Naive thymus-derived CD4-positive, alpha-beta T cell (primary cell): ENCODE measurements at regions of chr15 and their contacts with region 1.

Region 1: DNA sequence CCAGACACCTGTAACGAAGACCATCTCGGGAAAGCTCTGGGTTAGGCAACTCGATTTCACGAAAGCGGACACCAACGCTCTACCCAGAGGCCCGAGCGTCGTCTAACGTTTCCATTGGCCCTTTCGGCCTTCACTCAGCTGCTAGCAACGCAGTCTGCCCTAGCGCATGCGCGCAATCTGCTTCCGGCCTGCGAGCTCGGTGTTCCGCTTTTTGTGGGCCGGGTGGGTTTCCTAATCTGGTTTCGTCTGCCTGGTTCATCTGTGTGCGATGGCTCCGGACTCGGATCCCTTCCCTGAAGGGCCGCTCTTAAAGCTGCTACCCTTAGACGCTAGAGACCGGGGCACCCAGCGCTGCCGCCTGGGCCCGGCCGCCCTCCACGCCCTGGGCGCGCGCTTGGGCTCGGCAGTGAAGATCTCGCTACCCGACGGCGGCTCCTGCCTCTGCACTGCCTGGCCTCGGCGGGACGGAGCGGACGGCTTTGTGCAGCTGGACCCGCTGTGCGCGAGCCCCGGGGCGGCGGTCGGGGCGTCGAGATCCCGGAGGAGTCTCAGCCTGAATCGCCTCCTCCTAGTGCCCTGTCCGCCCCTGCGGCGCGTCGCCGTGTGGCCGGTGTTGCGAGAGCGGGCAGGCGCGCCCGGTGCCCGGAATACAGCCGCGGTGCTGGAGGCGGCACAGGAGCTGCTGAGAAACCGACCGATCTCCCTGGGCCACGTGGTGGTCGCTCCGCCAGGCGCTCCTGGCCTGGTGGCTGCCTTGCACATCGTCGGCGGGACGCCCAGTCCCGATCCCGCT is 24.0 kb upstream of the GATM start:
- DNase-seq: peak; percentile 84 to 98 (median 96)
- ATAC-seq: peak; percentile 96
- H3K4me3 ChIP-seq: peak overlapping the region; percentile 86
- H3K4me3 Mint-ChIP-seq: peak overlapping the region; percentile 88 to 99 (median 96)
- H3K27ac ChIP-seq: peak overlapping the region; percentile 83
- H3K27ac Mint-ChIP-seq: peak overlapping the region; percentile 91 to 98 (median 95)
- H3K4me1 ChIP-seq: peaks cover 8 to 22% of the 10 kb centered on the region in 2 donors
- H3K4me1 Mint-ChIP-seq: peaks cover 18 to 40% (median 38%) of the 10 kb centered on the region in 7 donors
- H3K27me3 ChIP-seq: no peaks in the 10 kb centered on the region
- H3K27me3 Mint-ChIP-seq: peaks cover 0 to 14% (median 0%) of the 10 kb centered on the region in 5 donors

Region 2: GRCh38 chr15:43824302-43825246 is 1577.8 kb before region 1 on chr15 and contains the start of gene MFAP1:
- CTCF ChIA-PET with region 1: no interaction called
- POLR2A ChIA-PET with region 1: interaction called, 3 read pairs
- intact Hi-C with region 1: loop called in 1 of 2 experiments (anchors 2 kb)
- DNase-seq: peak; percentile 63 to 94 (median 89)
- ATAC-seq: peak; percentile 94
- H3K4me3 ChIP-seq: peak within 1 kb of the TSS; percentile 100
- H3K4me3 Mint-ChIP-seq: peak within 1 kb of the TSS; percentile 94 to 100 (median 98)
- H3K27ac ChIP-seq: peak within 1 kb of the TSS; percentile 97
- H3K27ac Mint-ChIP-seq: peak within 1 kb of the TSS; percentile 95 to 99 (median 98)
- H3K4me1 ChIP-seq: peaks cover 32 to 34% of the 10 kb centered on the region in 2 donors
- H3K4me1 Mint-ChIP-seq: peaks cover 37 to 81% (median 53%) of the 10 kb centered on the region in 7 donors
- H3K27me3 ChIP-seq: no peaks in the 10 kb centered on the region
- H3K27me3 Mint-ChIP-seq: no peaks in the 10 kb centered on the region
- total RNA-seq, gene MFAP1: 8.5 to 37.3 (median 21.8) TPM

Region 3: DNA sequence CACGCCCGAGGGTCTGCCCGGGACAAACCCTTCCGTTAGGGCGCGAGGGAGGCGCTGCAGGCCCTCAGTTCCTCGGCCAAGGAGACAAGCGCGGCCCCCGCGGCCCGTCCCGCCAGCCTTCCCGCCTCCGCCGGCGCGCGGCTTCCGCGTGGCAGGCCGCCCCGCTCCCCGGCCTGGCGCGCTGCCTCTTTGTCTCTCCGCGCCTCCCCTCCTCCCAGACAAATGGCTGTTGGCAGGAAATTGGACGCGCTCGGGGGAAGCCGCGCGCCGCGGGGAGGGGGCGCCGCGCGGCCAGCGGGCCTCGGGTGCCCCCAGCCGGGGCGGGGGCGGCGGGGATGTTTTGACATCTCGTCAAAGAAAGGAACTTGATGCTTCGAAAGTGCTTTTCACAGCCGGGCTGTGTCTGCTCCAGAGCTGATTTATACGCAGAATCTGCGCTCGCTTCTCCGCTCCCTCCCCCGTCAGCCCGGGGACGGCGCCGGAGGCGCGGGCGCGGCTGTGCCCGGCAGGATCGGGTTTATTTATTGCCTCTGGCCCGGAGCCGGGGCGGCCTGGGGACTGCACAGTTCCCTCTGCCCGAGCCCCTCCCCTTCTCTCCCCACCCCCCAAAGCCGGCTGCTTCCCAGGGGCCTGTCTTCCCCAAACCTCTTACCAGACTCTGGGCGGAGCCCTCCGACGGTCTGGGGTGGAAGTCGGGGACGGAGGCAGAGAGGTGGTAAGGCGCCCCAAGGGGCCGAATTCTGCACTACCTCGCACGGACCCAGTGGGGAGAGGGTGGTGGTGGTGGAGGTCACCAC is 235.3 kb before region 1 on chr15:
- CTCF ChIA-PET with region 1: interaction called, 36 read pairs
- POLR2A ChIA-PET with region 1: interaction called, 17 read pairs
- intact Hi-C with region 1: loop called in 1 of 2 experiments (anchors 1 kb)
- DNase-seq: peak; percentile 58 to 82 (median 78)
- ATAC-seq: peak; percentile 95
- H3K4me3 ChIP-seq: peak overlapping the region; percentile 70
- H3K4me3 Mint-ChIP-seq: peak overlapping the region; percentile 62 to 86 (median 74)
- H3K27ac ChIP-seq: peak overlapping the region; percentile 95
- H3K27ac Mint-ChIP-seq: peak overlapping the region; percentile 62 to 92 (median 83)
- H3K4me1 ChIP-seq: peaks cover 10 to 13% of the 10 kb centered on the region in 2 donors
- H3K4me1 Mint-ChIP-seq: peaks cover 0 to 31% (median 18%) of the 10 kb centered on the region in 7 donors
- H3K27me3 ChIP-seq: no peaks in the 10 kb centered on the region
- H3K27me3 Mint-ChIP-seq: no peaks in the 10 kb centered on the region

Region 4: GRCh38 chr15:45307230-45307924 is 95.0 kb before region 1 on chr15:
- CTCF ChIA-PET with region 1: no interaction called
- POLR2A ChIA-PET with region 1: no interaction called
- intact Hi-C with region 1: loop called (anchors 1 to 5 kb)
- DNase-seq: peak in 4 of 9 donors; percentile 1 to 19 (median 2)
- ATAC-seq: no peak
- H3K4me3 ChIP-seq: peak overlapping the region; percentile 15
- H3K4me3 Mint-ChIP-seq: peak overlapping the region in 9 of 10 donors; percentile 31 to 77 (median 70)
- H3K27ac ChIP-seq: no peak overlapping the region
- H3K27ac Mint-ChIP-seq: peak overlapping the region in 1 of 9 donors; percentile 26
- H3K4me1 ChIP-seq: no peaks in the 10 kb centered on the region
- H3K4me1 Mint-ChIP-seq: peaks cover 4 to 13% (median 8%) of the 10 kb centered on the region in 7 donors
- H3K27me3 ChIP-seq: no peaks in the 10 kb centered on the region
- H3K27me3 Mint-ChIP-seq: peaks cover 20 to 45% (median 33%) of the 10 kb centered on the region in 5 donors

Region 5: DNA sequence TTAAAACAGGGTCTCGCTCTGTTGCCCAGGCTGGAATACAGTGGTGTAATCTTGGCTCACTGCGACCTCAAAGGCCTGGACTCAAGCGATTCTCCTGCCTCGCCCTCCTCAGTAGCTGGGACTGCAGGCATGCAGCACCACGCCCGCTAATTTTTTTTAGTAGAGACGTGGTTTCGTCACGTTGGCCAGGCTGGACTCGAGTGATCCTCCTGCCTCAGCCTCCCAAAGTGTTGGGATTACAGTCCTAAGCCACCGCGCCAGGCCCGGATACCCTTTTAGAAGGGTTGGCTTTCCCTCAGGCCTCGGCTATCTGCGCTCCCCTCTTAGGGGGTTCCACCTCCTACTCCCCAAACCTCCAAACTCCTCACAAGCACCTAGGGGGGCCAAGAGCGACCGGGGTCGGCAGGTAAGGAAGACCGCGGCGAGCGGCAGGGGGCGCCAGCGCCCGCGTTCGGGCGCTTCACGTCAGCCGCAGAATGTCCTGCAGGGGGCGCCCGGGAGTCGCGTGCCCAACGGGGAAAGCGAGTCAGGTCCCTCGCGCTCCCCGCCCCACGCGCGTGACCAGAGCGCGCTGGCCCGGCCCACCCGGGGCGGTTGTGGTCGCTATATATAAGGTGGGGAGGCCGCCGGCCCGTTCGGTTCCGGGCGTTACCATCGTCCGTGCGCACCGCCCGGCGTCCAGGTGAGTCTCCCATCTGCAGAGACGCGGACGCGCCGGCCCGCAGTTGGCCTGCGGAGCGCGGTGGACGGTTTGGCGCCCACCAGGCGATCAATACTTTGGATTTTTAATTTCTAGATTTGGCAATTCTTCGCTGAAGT is 27.8 kb after region 1 on chr15:
- CTCF ChIA-PET with region 1: interaction called, 6 read pairs
- POLR2A ChIA-PET with region 1: no interaction called
- intact Hi-C with region 1: loop called in 1 of 2 experiments (anchors 1 kb)
- DNase-seq: peak; percentile 68 to 95 (median 83)
- ATAC-seq: peak; percentile 97
- H3K4me3 ChIP-seq: peak overlapping the region; percentile 53
- H3K4me3 Mint-ChIP-seq: peak overlapping the region in 9 of 10 donors; percentile 40 to 72 (median 62)
- H3K27ac ChIP-seq: no peak overlapping the region
- H3K27ac Mint-ChIP-seq: peak overlapping the region in 1 of 9 donors; percentile 13
- H3K4me1 ChIP-seq: no peaks in the 10 kb centered on the region
- H3K4me1 Mint-ChIP-seq: peaks cover 0 to 5% (median 1%) of the 10 kb centered on the region in 7 donors
- H3K27me3 ChIP-seq: no peaks in the 10 kb centered on the region
- H3K27me3 Mint-ChIP-seq: peaks cover 0 to 37% (median 5%) of the 10 kb centered on the region in 5 donors

Region 6: DNA sequence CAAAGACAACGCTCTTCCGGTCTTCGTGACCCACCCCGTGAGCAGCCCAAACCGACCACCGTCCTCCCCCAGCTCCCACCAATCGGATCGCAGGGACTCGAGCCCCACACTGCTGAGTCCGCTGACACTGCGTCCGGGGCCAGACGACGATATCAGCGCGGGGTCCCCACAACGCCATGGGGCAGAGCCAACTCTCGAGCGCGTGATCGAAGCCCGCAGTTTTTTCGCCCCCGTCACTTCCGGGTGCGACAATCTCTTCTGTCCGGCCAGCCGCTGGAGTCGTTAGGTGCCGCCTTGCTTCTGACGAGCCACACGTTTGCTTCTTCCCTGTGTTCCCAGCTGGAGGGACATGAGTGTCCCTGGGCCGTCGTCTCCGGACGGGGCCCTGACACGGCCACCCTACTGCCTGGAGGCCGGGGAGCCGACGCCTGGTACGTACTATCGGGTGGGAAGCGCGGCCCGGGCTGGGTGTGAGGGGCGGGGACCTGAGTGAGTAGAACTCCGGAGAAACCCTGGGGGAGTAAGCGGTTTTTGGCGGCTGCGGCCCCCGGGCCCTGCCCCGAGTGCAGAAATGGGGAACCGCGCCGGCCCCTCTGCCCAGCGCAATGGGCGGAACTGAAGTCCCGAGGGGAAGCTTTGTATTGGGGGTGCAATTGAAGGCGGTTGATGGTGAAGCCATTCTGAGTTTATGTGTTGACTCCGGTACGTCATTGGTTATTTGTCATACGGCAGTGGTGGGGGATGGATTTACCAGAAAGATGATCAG is 184.9 kb after region 1 on chr15 and contains the start of gene BLOC1S6:
- CTCF ChIA-PET with region 1: interaction called, 8 read pairs
- POLR2A ChIA-PET with region 1: interaction called, 53 read pairs
- intact Hi-C with region 1: loop called (anchors 1 kb)
- DNase-seq: peak; percentile 81 to 91 (median 87)
- ATAC-seq: peak; percentile 87
- H3K4me3 ChIP-seq: peak within 1 kb of the TSS; percentile 87
- H3K4me3 Mint-ChIP-seq: peak within 1 kb of the TSS; percentile 96 to 100 (median 98)
- H3K27ac ChIP-seq: peak within 1 kb of the TSS; percentile 97
- H3K27ac Mint-ChIP-seq: peak within 1 kb of the TSS; percentile 100
- H3K4me1 ChIP-seq: peaks cover 25 to 26% of the 10 kb centered on the region in 2 donors
- H3K4me1 Mint-ChIP-seq: peaks cover 27 to 55% (median 38%) of the 10 kb centered on the region in 7 donors
- H3K27me3 ChIP-seq: no peaks in the 10 kb centered on the region
- H3K27me3 Mint-ChIP-seq: no peaks in the 10 kb centered on the region
- total RNA-seq, gene BLOC1S6: 34.4 to 63.9 (median 50.9) TPM

Region 7: DNA sequence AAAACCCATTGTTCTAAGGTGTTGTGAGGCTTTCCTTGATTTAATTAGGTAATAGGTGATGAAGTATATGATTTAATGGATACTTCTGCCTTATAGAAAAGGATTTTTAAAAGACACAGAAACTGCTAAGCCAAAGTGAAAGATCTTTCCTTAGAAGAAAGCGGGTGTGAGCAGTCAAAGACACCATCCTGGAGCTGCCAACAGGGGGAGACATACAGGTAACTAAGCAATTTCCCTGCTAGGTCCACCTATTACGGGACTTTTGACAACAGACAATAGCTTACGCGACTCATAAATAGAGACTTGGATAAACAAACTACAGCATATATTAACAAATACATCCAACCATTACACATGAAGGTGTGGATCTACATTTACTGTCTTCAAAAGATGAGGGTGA is 902.0 kb after region 1 on chr15:
- CTCF ChIA-PET with region 1: no interaction called
- POLR2A ChIA-PET with region 1: no interaction called
- intact Hi-C with region 1: no loop called
- DNase-seq: no peak
- ATAC-seq: no peak
- H3K4me3 ChIP-seq: no peak overlapping the region
- H3K4me3 Mint-ChIP-seq: no peak overlapping the region
- H3K27ac ChIP-seq: no peak overlapping the region
- H3K27ac Mint-ChIP-seq: no peak overlapping the region
- H3K4me1 ChIP-seq: no peaks in the 10 kb centered on the region
- H3K4me1 Mint-ChIP-seq: no peaks in the 10 kb centered on the region
- H3K27me3 ChIP-seq: no peaks in the 10 kb centered on the region
- H3K27me3 Mint-ChIP-seq: peaks cover 0 to 6% (median 3%) of the 10 kb centered on the region in 5 donors